ENCODE measurements at regions of chr17 and their contacts with region 1.

Region 1: DNA sequence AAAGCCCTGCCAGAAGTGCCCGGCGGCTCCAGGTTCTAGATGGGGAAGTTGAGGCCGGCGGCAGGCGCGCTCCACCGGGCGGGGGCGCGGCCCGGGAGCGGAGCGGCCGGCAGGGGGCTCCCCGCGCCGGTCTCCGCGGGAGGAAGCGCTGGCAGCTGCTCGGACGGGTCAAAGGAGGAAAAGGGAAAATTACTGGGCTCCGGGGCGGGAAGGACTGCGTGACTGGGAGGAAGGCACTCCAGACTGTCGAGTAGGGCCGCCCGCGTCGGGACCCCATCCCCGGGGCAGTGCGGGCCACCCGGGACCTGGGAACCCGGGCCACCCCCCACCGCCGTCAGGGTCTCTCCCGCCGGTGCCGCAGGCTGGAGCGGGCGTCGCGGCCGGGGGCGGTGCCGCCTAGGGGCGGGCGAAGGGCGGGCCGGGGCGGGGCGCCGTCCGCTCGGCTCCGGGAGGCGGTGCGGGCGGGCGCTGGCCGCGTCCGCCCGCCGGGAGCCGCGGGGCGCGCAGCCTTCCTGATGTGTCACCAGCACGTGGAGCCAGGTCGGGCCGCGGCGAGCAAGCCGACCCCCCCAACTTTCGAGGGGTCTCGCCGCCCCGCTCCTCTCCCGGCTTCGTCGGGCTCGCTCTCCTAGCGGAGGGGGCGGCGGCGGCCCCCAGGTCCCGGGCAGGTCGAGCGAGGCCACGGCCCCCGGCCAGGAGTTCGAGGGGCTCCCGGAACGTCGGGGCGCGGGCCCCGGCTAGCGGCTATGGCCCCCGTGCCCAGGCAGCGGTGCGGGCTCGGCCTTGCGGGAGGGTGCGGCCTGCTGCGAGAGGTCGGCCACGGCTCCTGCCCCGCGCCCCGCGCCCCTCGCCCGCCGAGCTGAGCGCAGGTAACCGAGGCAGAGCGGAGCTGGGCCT is 167.5 kb downstream of the RAB11FIP4 start:
- DNase-seq: peak; percentile 83 to 90
- ATAC-seq: peak; percentile 89 to 95 (median 93)
- H3K4me3 ChIP-seq: peak overlapping the region; percentile 76
- H3K27ac ChIP-seq: peak overlapping the region; percentile 80
- H3K4me1 ChIP-seq: peaks cover 4% of the 10 kb centered on the region
- H3K27me3 ChIP-seq: peaks cover 0 to 7% (median 2%) of the 10 kb centered on the region in 3 donors
- CTCF ChIP-seq: peak; percentile 95

Region 2: GRCh38 chr17:31596382-31597323 is 37.7 kb after region 1 on chr17:
- intact Hi-C with region 1: loop called in 1 of 2 experiments (anchors 5 kb)
- DNase-seq: peak; percentile 84 to 94
- ATAC-seq: peak; percentile 92 to 95 (median 92)
- H3K4me3 ChIP-seq: no peak overlapping the region
- H3K27ac ChIP-seq: peak overlapping the region; percentile 91
- H3K4me1 ChIP-seq: peaks cover 37% of the 10 kb centered on the region
- H3K27me3 ChIP-seq: no peaks in the 10 kb centered on the region
- CTCF ChIP-seq: no peak

Region 3: GRCh38 chr17:31696184-31696602 is 137.2 kb after region 1 on chr17:
- intact Hi-C with region 1: loop called in 1 of 2 experiments (anchors 2 kb)
- DNase-seq: peak; percentile 84 to 92
- ATAC-seq: peak; percentile 92 to 97 (median 94)
- H3K4me3 ChIP-seq: no peak overlapping the region
- H3K27ac ChIP-seq: no peak overlapping the region
- H3K4me1 ChIP-seq: peaks cover 6% of the 10 kb centered on the region
- H3K27me3 ChIP-seq: no peaks in the 10 kb centered on the region
- CTCF ChIP-seq: peak; percentile 13